Breast epithelium (tissue), 4 donors: ENCODE measurements at regions of chr12 and their contacts with region 1.

Region 1: DNA sequence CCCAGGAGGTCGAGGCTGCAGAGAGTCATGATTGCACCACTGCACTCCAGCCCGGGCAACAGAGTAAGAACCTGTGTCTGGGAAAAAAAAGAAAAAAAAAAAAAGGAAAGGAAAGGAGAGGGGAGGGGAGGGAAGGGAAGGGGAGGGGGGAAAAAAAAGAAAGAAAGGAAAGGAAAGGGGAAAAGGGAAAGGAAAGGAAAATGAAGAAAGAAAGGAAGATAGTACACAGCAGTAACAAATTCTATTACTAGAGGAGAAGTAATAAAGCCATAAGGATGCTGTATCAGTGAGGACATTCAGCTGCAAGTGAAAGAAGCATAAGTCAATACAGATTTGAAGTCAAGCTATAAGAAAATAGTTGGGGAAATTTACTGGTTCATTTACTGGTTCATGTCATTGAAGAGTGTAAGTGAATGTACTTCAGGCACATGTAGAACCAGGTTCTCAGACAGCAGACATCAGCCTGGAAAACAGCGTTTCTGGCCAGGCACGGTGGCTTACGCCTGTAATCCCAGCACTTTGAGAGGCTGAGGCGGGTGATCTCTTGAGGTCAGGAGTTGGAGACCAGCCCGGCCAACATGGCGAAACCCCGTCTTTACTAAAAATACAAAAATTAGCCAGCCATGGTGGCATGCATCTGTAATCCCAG is 37.4 kb downstream of the NDUFA12 start:
- DNase-seq: no peak
- H3K4me3 ChIP-seq: no peak overlapping the region
- H3K27ac ChIP-seq: no peak overlapping the region
- H3K4me1 ChIP-seq: no peaks in the 10 kb centered on the region
- H3K27me3 ChIP-seq: no peaks in the 10 kb centered on the region
- CTCF ChIP-seq: no peak
- POLR2A ChIP-seq: no peak

Region 2: GRCh38 chr12:94831081-94831751 is 134.9 kb before region 1 on chr12:
- intact Hi-C with region 1: no loop called
- DNase-seq: no peak
- H3K4me3 ChIP-seq: no peak overlapping the region
- H3K27ac ChIP-seq: no peak overlapping the region
- H3K4me1 ChIP-seq: no peaks in the 10 kb centered on the region
- H3K27me3 ChIP-seq: no peaks in the 10 kb centered on the region
- CTCF ChIP-seq: no peak
- POLR2A ChIP-seq: no peak

Region 3: DNA sequence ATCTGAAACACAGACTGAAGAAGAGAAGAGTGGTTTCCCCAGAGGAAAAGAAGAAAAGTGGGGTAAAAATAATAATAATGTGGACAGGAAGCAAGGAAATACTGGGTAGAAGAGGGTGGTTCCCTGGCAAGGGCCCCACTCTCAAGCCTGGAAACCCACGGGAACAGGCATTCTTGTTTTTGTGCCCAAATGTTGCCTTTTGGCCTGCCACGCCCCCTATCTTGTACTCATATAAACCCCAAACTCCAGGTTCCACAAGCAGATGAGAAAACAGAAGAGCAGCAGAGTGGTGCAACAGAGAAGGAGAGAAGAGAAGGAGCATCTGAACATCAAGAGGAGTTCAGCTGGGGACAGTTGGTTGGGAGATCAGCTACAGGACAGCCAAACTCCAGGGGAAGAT is 13.8 kb before region 1 on chr12:
- intact Hi-C with region 1: loop called (anchors 1 kb)
- DNase-seq: no peak
- H3K4me3 ChIP-seq: no peak overlapping the region
- H3K27ac ChIP-seq: no peak overlapping the region
- H3K4me1 ChIP-seq: no peaks in the 10 kb centered on the region
- H3K27me3 ChIP-seq: no peaks in the 10 kb centered on the region
- CTCF ChIP-seq: no peak
- POLR2A ChIP-seq: no peak